GM12878 (cell line): ENCODE measurements at regions of chr12 and their contacts with region 1.

Region 1: GRCh38 chr12:66169221-66170170 is at the start of gene TMBIM4:
- DNase-seq: peak; percentile 77
- ATAC-seq: peak; percentile 90
- H3K4me3 ChIP-seq: peak within 1 kb of the TSS; percentile 62
- H3K27ac ChIP-seq: peak within 1 kb of the TSS; percentile 99
- H3K4me1 ChIP-seq: no peaks in the 10 kb centered on the region
- H3K27me3 ChIP-seq: no peaks in the 10 kb centered on the region
- CTCF ChIP-seq: peak; percentile 18 to 43 (median 23); a peak in 4 of 6 replicates
- EP300 ChIP-seq: peak in 1 of 2 experiments; percentile 1; a peak in 1 of 4 replicates
- POLR2A ChIP-seq: peak; percentile 96
- RAD21 ChIP-seq: peak; percentile 45
- polyA plus RNA-seq, gene TMBIM4: 261 to 341 TPM

Region 2: DNA sequence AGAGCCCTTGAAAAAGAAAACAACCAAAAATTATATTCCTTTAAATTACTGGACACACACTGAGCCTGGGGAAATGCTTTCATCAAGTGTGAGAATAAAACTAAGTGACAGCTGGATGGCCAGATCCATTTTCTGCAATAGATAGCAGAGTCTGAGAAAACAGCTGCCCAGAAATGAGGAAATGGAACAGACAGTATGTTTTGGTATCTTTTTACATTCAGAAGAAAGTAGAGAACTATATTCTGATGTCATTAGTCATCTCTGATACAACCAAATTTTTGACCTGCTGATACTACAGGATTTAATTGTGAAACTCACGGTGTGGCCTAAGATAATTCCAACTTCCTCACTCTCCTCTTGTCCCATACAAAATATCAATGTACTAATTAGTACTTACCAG is 267.0 kb before region 1 on chr12:
- CTCF ChIA-PET with region 1: no interaction called
- POLR2A ChIA-PET with region 1: no interaction called
- RAD21 ChIA-PET with region 1: no interaction called
- SMC1A ChIA-PET with region 1: no interaction called
- in situ Hi-C with region 1: no loop called
- intact Hi-C with region 1: no loop called
- DNase-seq: no peak
- ATAC-seq: peak; percentile 87
- H3K4me3 ChIP-seq: no peak overlapping the region
- H3K27ac ChIP-seq: peak overlapping the region; percentile 24; the same call in 1 of the 2 replicates
- H3K4me1 ChIP-seq: peaks cover 2% of the 10 kb centered on the region; the same call in 1 of the 2 replicates
- H3K27me3 ChIP-seq: no peaks in the 10 kb centered on the region
- CTCF ChIP-seq: no peak
- EP300 ChIP-seq: 0 out of 4 replicates have a peak, but pooled peaks of 1 of the 2 experiments have one; percentile 36
- POLR2A ChIP-seq: no peak
- RAD21 ChIP-seq: no peak

Region 3: DNA sequence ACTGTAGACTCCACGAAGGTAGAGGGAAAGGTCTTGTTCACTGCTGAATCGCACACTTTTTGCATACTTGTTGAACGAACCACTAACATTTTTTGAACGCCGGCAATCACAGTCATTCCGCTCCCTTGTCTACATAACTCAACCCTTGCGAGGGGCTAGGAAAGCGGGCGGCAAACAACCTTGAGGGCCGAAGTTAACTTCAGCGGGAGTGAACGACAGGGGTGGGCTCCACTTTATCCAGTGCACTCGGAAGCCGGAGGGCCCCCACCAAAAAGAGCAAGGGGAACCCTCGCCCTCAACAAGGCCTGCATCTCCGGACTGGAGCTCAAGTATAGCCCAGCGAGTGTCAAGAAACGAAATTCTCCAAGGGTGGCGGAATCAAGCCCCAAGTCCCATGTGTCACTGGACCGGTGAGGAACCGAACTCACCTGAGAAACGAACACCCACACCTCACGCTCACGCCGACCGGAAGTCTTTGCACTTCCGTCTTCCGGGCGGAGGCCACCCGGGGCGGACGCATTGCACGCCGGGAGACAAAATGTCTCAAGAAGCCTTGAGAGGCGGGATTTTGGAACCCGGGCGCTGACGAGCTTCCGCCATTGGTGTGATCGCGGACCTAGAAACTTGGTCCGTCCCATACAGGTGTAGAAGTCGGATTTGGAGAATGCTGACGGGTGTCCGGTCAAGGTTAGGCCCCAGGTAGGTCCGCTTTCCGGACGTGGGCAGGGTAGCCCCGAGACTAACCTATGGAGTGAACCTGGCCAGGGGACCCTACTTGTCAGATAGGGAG is 39.0 kb before region 1 on chr12 and contains the start of gene LLPH:
- CTCF ChIA-PET with region 1: interaction called, 9 read pairs
- POLR2A ChIA-PET with region 1: interaction called, 12 read pairs
- RAD21 ChIA-PET with region 1: interaction called, 6 read pairs
- SMC1A ChIA-PET with region 1: interaction called, 16 read pairs
- in situ Hi-C with region 1: no loop called
- intact Hi-C with region 1: loop called (anchors 1 kb)
- DNase-seq: peak; percentile 57
- ATAC-seq: peak; percentile 97
- H3K4me3 ChIP-seq: peak within 1 kb of the TSS; percentile 92
- H3K27ac ChIP-seq: peak within 1 kb of the TSS; percentile 88
- H3K4me1 ChIP-seq: peaks cover 9% of the 10 kb centered on the region
- H3K27me3 ChIP-seq: no peaks in the 10 kb centered on the region
- CTCF ChIP-seq: no peak
- EP300 ChIP-seq: 0 out of 4 replicates have a peak, but pooled peaks of 1 of the 2 experiments have one; percentile 24
- POLR2A ChIP-seq: peak; percentile 96
- RAD21 ChIP-seq: no peak
- polyA plus RNA-seq, gene LLPH: 96.1 to 107 TPM

Region 4: GRCh38 chr12:66190519-66191370 is 21.2 kb after region 1 on chr12:
- CTCF ChIA-PET with region 1: interaction called, 6 read pairs
- POLR2A ChIA-PET with region 1: interaction called, 5 read pairs
- RAD21 ChIA-PET with region 1: interaction called, 14 read pairs
- SMC1A ChIA-PET with region 1: interaction called, 21 read pairs
- in situ Hi-C with region 1: no loop called
- intact Hi-C with region 1: loop called (anchors 2 kb)
- DNase-seq: no peak
- ATAC-seq: peak; percentile 53
- H3K4me3 ChIP-seq: peak overlapping the region; percentile 22; the same call in 1 of the 2 replicates
- H3K27ac ChIP-seq: peak overlapping the region; percentile 38
- H3K4me1 ChIP-seq: peaks cover 25% of the 10 kb centered on the region
- H3K27me3 ChIP-seq: peaks cover 0 to 5% of the 10 kb centered on the region in 2 experiments; a peak in 1 of 4 replicates
- CTCF ChIP-seq: no peak
- EP300 ChIP-seq: 0 out of 4 replicates have a peak, but pooled peaks of 1 of the 2 experiments have one; percentile 10
- POLR2A ChIP-seq: no peak
- RAD21 ChIP-seq: no peak

Region 5: GRCh38 chr12:66235626-66236281 is 66.3 kb after region 1 on chr12:
- CTCF ChIA-PET with region 1: interaction called, 17 read pairs
- POLR2A ChIA-PET with region 1: interaction called, 4 read pairs
- RAD21 ChIA-PET with region 1: interaction called, 11 read pairs
- SMC1A ChIA-PET with region 1: interaction called, 11 read pairs
- in situ Hi-C with region 1: no loop called
- intact Hi-C with region 1: loop called (anchors 1 kb)
- DNase-seq: no peak
- ATAC-seq: 0 out of 3 replicates have a peak, but pooled peaks have one; percentile 13
- H3K4me3 ChIP-seq: no peak overlapping the region; the same call in 1 of the 2 replicates
- H3K27ac ChIP-seq: no peak overlapping the region
- H3K4me1 ChIP-seq: peaks cover 8% of the 10 kb centered on the region; the same call in 1 of the 2 replicates
- H3K27me3 ChIP-seq: no peaks in the 10 kb centered on the region
- CTCF ChIP-seq: 0 out of 6 replicates have a peak, but pooled peaks of 1 of the 3 experiments have one; percentile 9
- EP300 ChIP-seq: no peak
- POLR2A ChIP-seq: no peak
- RAD21 ChIP-seq: no peak

Region 6: GRCh38 chr12:66301944-66302826 is 132.7 kb after region 1 on chr12 and contains the start of gene HELB:
- CTCF ChIA-PET with region 1: no interaction called
- POLR2A ChIA-PET with region 1: interaction called, 6 read pairs
- RAD21 ChIA-PET with region 1: interaction called, 5 read pairs
- SMC1A ChIA-PET with region 1: interaction called, 6 read pairs
- in situ Hi-C with region 1: loop called (anchors 5 kb)
- intact Hi-C with region 1: loop called (anchors 2 kb)
- DNase-seq: peak; percentile 88
- ATAC-seq: peak; percentile 91
- H3K4me3 ChIP-seq: peak within 1 kb of the TSS; percentile 85
- H3K27ac ChIP-seq: peak within 1 kb of the TSS; percentile 87
- H3K4me1 ChIP-seq: no peaks in the 10 kb centered on the region; the same call in 1 of the 2 replicates
- H3K27me3 ChIP-seq: no peaks in the 10 kb centered on the region
- CTCF ChIP-seq: no peak
- EP300 ChIP-seq: no peak
- POLR2A ChIP-seq: peak; percentile 94
- RAD21 ChIP-seq: no peak
- polyA plus RNA-seq, gene HELB: 0.58 to 1.0 TPM